HepG2 (cell line): ENCODE measurements at regions of chr14 and their contacts with region 1.

Region 1: DNA sequence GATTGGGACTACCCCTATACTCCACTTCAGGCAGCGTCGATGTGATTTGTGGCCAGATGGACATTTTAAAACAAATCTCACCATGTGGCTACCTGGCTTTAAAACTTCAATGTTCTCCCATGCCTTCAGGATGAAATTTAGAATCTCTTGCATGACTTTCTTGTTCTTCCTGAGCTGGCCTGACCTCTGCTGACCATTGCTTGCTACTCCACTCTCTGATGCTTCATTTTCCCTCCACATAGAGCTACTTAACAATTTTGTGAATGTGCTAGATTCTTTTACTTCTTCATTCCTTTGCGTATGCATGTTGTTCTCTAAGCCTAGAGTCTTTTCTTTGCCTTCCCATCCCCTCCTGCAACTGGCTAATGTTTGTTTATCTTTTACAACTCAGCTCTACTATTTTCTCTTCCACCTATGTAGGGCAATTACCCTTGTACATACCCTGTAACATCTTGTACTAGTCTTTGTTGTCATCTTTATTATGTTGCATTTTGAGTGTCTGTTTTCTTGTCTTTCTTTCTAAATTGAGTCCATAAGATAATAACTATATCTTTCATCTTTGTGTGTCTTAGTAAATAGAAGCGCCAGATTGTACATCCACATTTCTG is 41.2 kb downstream of the YLPM1 start:
- DNase-seq: peak; percentile 26
- ATAC-seq: peak; percentile 77
- H3K4me3 ChIP-seq: no peak overlapping the region
- H3K27ac ChIP-seq: no peak overlapping the region
- H3K4me1 ChIP-seq: no peaks in the 10 kb centered on the region
- H3K27me3 ChIP-seq: no peaks in the 10 kb centered on the region
- CTCF ChIP-seq: peak; percentile 50
- EP300 ChIP-seq: no peak
- POLR2A ChIP-seq: no peak
- RAD21 ChIP-seq: no peak

Region 2: DNA sequence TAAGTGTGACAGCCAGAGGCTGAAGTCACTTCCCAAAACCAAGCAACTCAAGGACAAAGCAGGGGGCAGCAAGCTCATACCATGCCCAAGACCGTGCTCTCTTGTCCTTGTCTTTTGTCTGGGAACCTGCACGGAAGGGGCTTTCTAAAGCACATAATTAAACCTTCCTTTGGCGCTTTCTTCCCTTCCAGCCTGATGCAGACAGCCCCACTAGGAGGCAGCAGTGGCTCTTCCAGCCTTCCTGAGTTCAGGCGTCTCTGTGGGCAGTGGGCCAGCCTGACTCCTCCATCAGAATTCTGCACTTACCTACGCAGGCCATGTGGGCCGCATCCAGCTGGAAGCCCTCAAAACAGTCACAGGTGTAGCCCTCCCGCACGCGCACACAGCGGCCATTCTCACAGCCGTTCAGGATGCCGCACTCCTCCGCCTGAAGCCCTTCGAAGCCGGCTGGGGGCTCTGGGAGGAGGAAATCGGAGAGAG is 303.1 kb before region 1 on chr14:
- CTCF ChIA-PET with region 1: no interaction called
- POLR2A ChIA-PET with region 1: no interaction called
- in situ Hi-C with region 1: no loop called
- intact Hi-C with region 1: loop called (anchors 5 kb)
- DNase-seq: peak; percentile 52
- ATAC-seq: peak; percentile 82
- H3K4me3 ChIP-seq: no peak overlapping the region
- H3K27ac ChIP-seq: no peak overlapping the region
- H3K4me1 ChIP-seq: no peaks in the 10 kb centered on the region
- H3K27me3 ChIP-seq: peaks cover 0 to 16% of the 10 kb centered on the region in 2 experiments; a peak in 2 of 5 replicates
- CTCF ChIP-seq: peak; percentile 72
- EP300 ChIP-seq: no peak
- POLR2A ChIP-seq: no peak
- RAD21 ChIP-seq: peak; percentile 49; the same call in 1 of the 2 replicates

Region 3: GRCh38 chr14:75783184-75783583 is 978.9 kb after region 1 on chr14:
- CTCF ChIA-PET with region 1: no interaction called
- POLR2A ChIA-PET with region 1: no interaction called
- in situ Hi-C with region 1: no loop called
- intact Hi-C with region 1: no loop called
- DNase-seq: no peak
- ATAC-seq: no peak
- H3K4me3 ChIP-seq: no peak overlapping the region
- H3K27ac ChIP-seq: no peak overlapping the region
- H3K4me1 ChIP-seq: no peaks in the 10 kb centered on the region
- H3K27me3 ChIP-seq: no peaks in the 10 kb centered on the region
- CTCF ChIP-seq: no peak
- EP300 ChIP-seq: no peak
- POLR2A ChIP-seq: no peak
- RAD21 ChIP-seq: no peak